Dendritic cell treated with granulocyte-macrophage colony-stimulating factor and Interleukin-4, amounts not matched to agents 40 ng/mL and 50 ng/mL, for 4 days (primary cell): ENCODE measurements at regions of chr1 and their contacts with region 1.

Region 1: GRCh38 chr1:221708987-221709386 is 32.9 kb downstream of the DUSP10 start:
- H3K4me3 Mint-ChIP-seq: no peak overlapping the region
- H3K27ac Mint-ChIP-seq: peak overlapping the region; percentile 80
- H3K4me1 Mint-ChIP-seq: peaks cover 68% of the 10 kb centered on the region
- H3K27me3 Mint-ChIP-seq: no peaks in the 10 kb centered on the region

Region 2: GRCh38 chr1:221693087-221693486 is 15.9 kb before region 1 on chr1:
- intact Hi-C with region 1: no loop called
- H3K4me3 Mint-ChIP-seq: no peak overlapping the region
- H3K27ac Mint-ChIP-seq: no peak overlapping the region
- H3K4me1 Mint-ChIP-seq: peaks cover 6% of the 10 kb centered on the region
- H3K27me3 Mint-ChIP-seq: no peaks in the 10 kb centered on the region

Region 3: DNA sequence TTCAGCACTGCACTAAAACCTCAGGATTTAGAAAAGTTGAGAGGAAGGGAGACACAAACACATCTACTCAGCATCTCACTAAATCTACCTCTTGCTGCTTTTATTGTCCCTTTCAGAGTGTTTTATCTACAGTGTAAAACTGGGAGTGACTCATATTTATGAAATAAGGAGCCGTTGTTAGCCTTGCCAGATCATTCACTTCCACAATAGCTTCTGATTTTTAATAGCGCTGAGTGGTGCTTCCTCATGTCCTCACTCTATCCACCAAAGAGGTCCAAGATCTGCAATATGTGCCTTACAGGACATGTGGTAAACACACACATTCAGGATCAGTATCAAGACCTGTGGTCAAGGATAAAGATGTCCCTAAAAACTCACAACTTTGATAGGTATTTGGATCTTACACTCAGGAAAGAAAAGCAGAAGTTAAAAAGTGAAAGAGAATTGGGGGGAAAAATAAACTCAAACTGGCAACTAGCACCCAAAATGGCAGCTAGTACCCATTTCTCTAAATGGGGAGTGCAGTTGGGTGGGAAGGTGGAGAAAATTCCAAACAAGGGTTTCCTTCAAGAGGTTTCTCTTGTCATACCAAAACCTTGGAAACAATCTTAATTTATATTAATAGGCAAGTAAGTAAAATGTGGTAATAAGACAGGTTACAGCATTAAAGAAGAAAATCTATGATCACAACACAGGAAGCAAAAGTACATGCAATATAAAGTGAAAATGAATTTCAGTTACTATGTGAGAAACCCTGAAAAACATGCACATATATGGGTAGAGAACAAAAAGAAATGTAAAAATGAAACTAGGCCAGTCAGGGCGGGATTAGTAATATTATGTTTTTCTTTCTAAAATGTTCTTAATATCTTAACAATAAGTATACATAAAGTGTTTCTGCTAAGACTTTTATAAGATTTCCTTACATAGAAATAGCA is 17.0 kb after region 1 on chr1:
- intact Hi-C with region 1: loop called (anchors 2 kb)
- H3K4me3 Mint-ChIP-seq: peak overlapping the region; percentile 57
- H3K27ac Mint-ChIP-seq: peak overlapping the region; percentile 85
- H3K4me1 Mint-ChIP-seq: peaks cover 49% of the 10 kb centered on the region
- H3K27me3 Mint-ChIP-seq: no peaks in the 10 kb centered on the region

Region 4: DNA sequence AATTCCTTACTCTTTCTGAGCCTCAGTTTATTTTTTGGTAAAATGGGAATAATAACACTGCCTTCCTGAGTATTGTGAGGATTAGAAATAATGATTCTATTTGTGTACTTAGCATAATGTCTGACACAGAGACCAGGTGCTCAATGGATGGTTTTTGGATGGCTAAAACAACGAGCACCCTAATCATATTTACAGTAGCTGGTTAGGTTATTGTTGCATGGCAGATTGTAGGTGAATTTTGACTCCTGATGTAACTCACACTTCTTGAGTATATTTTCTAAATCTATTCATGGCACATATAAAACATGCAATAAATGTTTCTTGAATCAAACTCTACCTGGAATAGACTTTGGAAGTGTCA is 44.8 kb after region 1 on chr1:
- intact Hi-C with region 1: no loop called
- H3K4me3 Mint-ChIP-seq: no peak overlapping the region
- H3K27ac Mint-ChIP-seq: peak overlapping the region; percentile 72
- H3K4me1 Mint-ChIP-seq: peaks cover 33% of the 10 kb centered on the region
- H3K27me3 Mint-ChIP-seq: peaks cover 2% of the 10 kb centered on the region

Region 5: GRCh38 chr1:221777431-221778072 is 68.6 kb after region 1 on chr1:
- intact Hi-C with region 1: loop called (anchors 2 kb)
- H3K4me3 Mint-ChIP-seq: no peak overlapping the region
- H3K27ac Mint-ChIP-seq: peak overlapping the region; percentile 83
- H3K4me1 Mint-ChIP-seq: peaks cover 66% of the 10 kb centered on the region
- H3K27me3 Mint-ChIP-seq: peaks cover 2% of the 10 kb centered on the region

Region 6: DNA sequence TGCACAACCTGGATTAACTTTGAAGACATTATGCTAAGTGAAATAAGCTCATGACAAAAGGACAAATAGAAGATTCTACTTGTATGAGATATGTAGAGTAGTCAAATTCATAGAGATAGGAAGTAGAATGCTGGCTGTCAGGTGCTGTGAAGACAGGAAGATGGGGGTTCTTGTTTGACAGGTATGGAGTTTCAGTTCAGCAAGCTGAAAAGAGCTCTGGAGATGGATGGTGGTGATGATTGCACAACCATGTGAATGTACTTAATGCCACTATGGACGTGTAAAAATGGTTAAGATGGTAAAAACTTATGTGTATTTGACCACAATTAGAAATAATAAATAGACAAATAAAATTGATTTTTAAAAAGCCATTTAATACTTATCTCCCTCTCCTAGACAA is 202.7 kb after region 1 on chr1:
- intact Hi-C with region 1: no loop called
- H3K4me3 Mint-ChIP-seq: no peak overlapping the region
- H3K27ac Mint-ChIP-seq: no peak overlapping the region
- H3K4me1 Mint-ChIP-seq: no peaks in the 10 kb centered on the region
- H3K27me3 Mint-ChIP-seq: no peaks in the 10 kb centered on the region